HEK293 (cell line): ENCODE measurements at regions of chr1 and their contacts with region 1.

Region 1: GRCh38 chr1:6704746-6705145 is 3.1 kb upstream of the DNAJC11 start:
- H3K4me3 ChIP-seq: no peak overlapping the region
- H3K27ac ChIP-seq: no peak overlapping the region
- H3K4me1 ChIP-seq: no peaks in the 10 kb centered on the region
- CTCF ChIP-seq: no peak

Region 2: GRCh38 chr1:6523566-6523965 is 181.2 kb before region 1 on chr1:
- CTCF ChIA-PET with region 1: no interaction called
- POLR2A ChIA-PET with region 1: no interaction called
- H3K4me3 ChIP-seq: no peak overlapping the region
- H3K27ac ChIP-seq: no peak overlapping the region
- H3K4me1 ChIP-seq: peaks cover 5% of the 10 kb centered on the region; the same call in 1 of the 2 replicates
- CTCF ChIP-seq: peak; percentile 44; the same call in 1 of the 2 replicates

Region 3: GRCh38 chr1:6535214-6535613 is 169.5 kb before region 1 on chr1:
- CTCF ChIA-PET with region 1: no interaction called
- POLR2A ChIA-PET with region 1: no interaction called
- H3K4me3 ChIP-seq: no peak overlapping the region
- H3K27ac ChIP-seq: no peak overlapping the region
- H3K4me1 ChIP-seq: no peaks in the 10 kb centered on the region
- CTCF ChIP-seq: no peak

Region 4: GRCh38 chr1:6724516-6725141 is 19.9 kb after region 1 on chr1:
- CTCF ChIA-PET with region 1: interaction called, 10 read pairs
- POLR2A ChIA-PET with region 1: no interaction called
- H3K4me3 ChIP-seq: no peak overlapping the region
- H3K27ac ChIP-seq: no peak overlapping the region
- H3K4me1 ChIP-seq: no peaks in the 10 kb centered on the region
- CTCF ChIP-seq: no peak